ENCODE measurements at regions of chr7 and their contacts with region 1.

Region 1: GRCh38 chr7:127959770-127960169 is 71.5 kb downstream of the LRRC4 start:
- DNase-seq: no peak
- ATAC-seq: no peak
- H3K4me3 Mint-ChIP-seq: no peak overlapping the region
- H3K27ac Mint-ChIP-seq: no peak overlapping the region
- H3K4me1 Mint-ChIP-seq: no peaks in the 10 kb centered on the region
- H3K27me3 Mint-ChIP-seq: no peaks in the 10 kb centered on the region
- CTCF ChIP-seq: no peak

Region 2: GRCh38 chr7:127819975-127820731 is 139.6 kb before region 1 on chr7:
- CTCF ChIA-PET with region 1: no interaction called
- POLR2A ChIA-PET with region 1: no interaction called
- DNase-seq: no peak
- ATAC-seq: no peak
- H3K4me3 Mint-ChIP-seq: no peak overlapping the region
- H3K27ac Mint-ChIP-seq: no peak overlapping the region; the same call in 1 of the 2 replicates
- H3K4me1 Mint-ChIP-seq: peaks cover 63% of the 10 kb centered on the region
- H3K27me3 Mint-ChIP-seq: no peaks in the 10 kb centered on the region
- CTCF ChIP-seq: no peak

Region 3: GRCh38 chr7:127941476-127942210 is 18.1 kb before region 1 on chr7:
- CTCF ChIA-PET with region 1: no interaction called
- POLR2A ChIA-PET with region 1: interaction called, 10 read pairs
- DNase-seq: no peak
- ATAC-seq: no peak
- H3K4me3 Mint-ChIP-seq: no peak overlapping the region
- H3K27ac Mint-ChIP-seq: no peak overlapping the region
- H3K4me1 Mint-ChIP-seq: peaks cover 19% of the 10 kb centered on the region
- H3K27me3 Mint-ChIP-seq: no peaks in the 10 kb centered on the region
- CTCF ChIP-seq: no peak

Region 4: DNA sequence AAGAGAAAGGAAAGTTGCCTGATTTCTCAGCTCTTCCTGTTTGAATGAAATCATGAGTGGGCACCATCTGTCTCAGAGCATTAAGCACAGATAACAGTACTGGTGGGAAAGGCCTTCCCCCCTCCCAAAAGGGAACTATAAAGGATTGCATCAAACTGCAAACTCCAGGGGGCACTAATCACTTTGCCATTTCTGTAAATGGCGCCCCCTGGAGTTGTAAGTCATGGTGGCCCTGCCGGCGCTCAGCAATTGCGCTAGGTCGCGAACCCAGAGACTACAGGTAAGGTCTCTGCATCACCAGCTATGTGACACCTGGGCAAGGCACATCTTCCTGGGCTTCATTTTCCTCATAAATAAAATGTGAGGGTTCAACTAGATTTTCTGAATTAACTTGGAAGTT is 60.4 kb after region 1 on chr7:
- CTCF ChIA-PET with region 1: interaction called, 12 read pairs
- POLR2A ChIA-PET with region 1: no interaction called
- DNase-seq: peak; percentile 74
- ATAC-seq: peak; percentile 38
- H3K4me3 Mint-ChIP-seq: no peak overlapping the region
- H3K27ac Mint-ChIP-seq: no peak overlapping the region
- H3K4me1 Mint-ChIP-seq: peaks cover 78% of the 10 kb centered on the region
- H3K27me3 Mint-ChIP-seq: no peaks in the 10 kb centered on the region
- CTCF ChIP-seq: peak; percentile 83

Measured in WTC11 (cell line).